Adrenal gland (tissue), 19 donors: ENCODE measurements at regions of chr15 and their contacts with region 1.

Region 1: DNA sequence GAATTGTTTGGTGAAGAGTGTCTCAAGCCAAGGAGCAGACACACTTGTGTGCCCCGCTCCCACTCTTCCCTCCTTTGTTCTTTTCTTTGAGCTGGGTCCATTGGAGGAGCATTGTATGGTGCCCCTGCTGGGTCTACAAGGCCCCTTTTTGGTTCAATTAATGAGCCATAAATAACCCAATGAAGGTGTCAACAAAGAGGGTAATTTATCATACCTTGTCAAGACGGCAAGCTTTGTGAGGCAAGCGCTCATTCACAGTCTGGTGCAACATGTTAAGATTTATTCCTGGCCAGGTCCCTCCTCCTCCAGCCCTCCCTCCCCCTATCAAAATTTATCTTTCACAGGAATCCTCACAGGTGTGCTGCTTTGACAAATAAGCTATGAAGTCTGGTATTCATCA is 300.1 kb downstream of the RORA start:
- DNase-seq: no peak
- H3K4me3 ChIP-seq: no peak overlapping the region
- H3K27ac ChIP-seq: no peak overlapping the region
- H3K4me1 ChIP-seq: no peaks in the 10 kb centered on the region
- H3K27me3 ChIP-seq: no peaks in the 10 kb centered on the region
- CTCF ChIP-seq: no peak
- POLR2A ChIP-seq: no peak

Region 2: GRCh38 chr15:60511351-60512031 is 417.5 kb before region 1 on chr15:
- intact Hi-C with region 1: loop called in 1 of 2 experiments (anchors 10 kb)
- DNase-seq: no peak
- H3K4me3 ChIP-seq: no peak overlapping the region
- H3K27ac ChIP-seq: peak overlapping the region in 1 of 5 donors; percentile 3
- H3K4me1 ChIP-seq: peaks cover 12 to 39% of the 10 kb centered on the region in 2 donors
- H3K27me3 ChIP-seq: no peaks in the 10 kb centered on the region
- CTCF ChIP-seq: no peak
- POLR2A ChIP-seq: no peak

Region 3: GRCh38 chr15:61266921-61267320 is 338.0 kb after region 1 on chr15:
- intact Hi-C with region 1: no loop called
- DNase-seq: no peak
- H3K4me3 ChIP-seq: no peak overlapping the region
- H3K27ac ChIP-seq: no peak overlapping the region
- H3K4me1 ChIP-seq: no peaks in the 10 kb centered on the region
- H3K27me3 ChIP-seq: no peaks in the 10 kb centered on the region
- CTCF ChIP-seq: no peak
- POLR2A ChIP-seq: no peak